CD4-positive, alpha-beta T cell (primary cell): ENCODE measurements at regions of chr9 and their contacts with region 1.

Region 1: DNA sequence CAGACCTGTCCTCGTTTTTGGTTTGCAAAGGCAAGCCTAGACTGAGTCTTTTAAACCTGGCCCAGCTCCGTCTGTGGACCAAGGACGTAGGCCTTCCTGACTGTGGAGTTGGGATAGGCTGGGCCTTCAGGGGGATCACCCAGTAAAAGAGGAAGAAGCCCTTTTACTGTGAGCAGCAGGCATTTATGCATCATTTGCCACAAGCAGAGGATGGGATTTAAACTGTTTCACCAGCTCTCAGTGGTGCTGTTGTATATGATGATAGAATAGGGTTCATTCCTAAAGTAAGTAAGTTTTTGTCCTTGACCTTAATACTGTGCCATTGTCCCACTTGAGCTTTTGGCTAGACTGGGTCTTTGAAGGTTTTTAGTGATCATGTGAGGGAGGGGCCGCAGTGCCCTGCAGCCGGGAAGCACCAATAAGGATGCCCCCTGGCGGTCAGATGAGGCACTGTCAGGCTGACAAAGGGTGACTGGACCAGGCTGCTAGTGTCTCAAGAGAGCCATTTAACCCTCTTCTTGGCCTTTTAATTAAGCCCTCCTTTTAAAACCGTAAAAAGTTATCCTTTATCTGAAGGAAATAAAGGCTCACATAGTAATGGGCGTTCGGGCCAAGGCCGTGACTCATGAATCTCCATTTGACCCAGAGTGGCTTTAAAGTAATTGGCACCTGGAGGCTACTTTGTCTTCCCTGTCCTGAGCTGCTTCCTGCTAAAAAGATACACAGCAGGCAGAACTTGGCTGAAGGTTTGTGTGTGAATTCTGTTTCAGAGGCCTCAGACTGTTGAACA is 74.0 kb downstream of the UBAP1 start:
- DNase-seq: peak; percentile 36 to 81 (median 56)
- ATAC-seq: peak; percentile 75
- H3K4me3 ChIP-seq: no peak overlapping the region
- H3K4me3 Mint-ChIP-seq: no peak overlapping the region
- H3K27ac ChIP-seq: no peak overlapping the region
- H3K27ac Mint-ChIP-seq: peak overlapping the region; percentile 71
- H3K4me1 ChIP-seq: peaks cover 21% of the 10 kb centered on the region
- H3K4me1 Mint-ChIP-seq: peaks cover 25% of the 10 kb centered on the region
- H3K27me3 ChIP-seq: no peaks in the 10 kb centered on the region
- H3K27me3 Mint-ChIP-seq: no peaks in the 10 kb centered on the region
- CTCF ChIP-seq: peak; percentile 91

Region 2: GRCh38 chr9:34010979-34011378 is 241.9 kb before region 1 on chr9:
- CTCF ChIA-PET with region 1: no interaction called
- POLR2A ChIA-PET with region 1: no interaction called
- intact Hi-C with region 1: loop called (anchors 1 kb)
- DNase-seq: peak in 4 of 14 experiments; percentile 15 to 43 (median 40)
- ATAC-seq: peak; percentile 48
- H3K4me3 ChIP-seq: no peak overlapping the region
- H3K4me3 Mint-ChIP-seq: no peak overlapping the region
- H3K27ac ChIP-seq: no peak overlapping the region
- H3K27ac Mint-ChIP-seq: no peak overlapping the region
- H3K4me1 ChIP-seq: no peaks in the 10 kb centered on the region
- H3K4me1 Mint-ChIP-seq: no peaks in the 10 kb centered on the region
- H3K27me3 ChIP-seq: no peaks in the 10 kb centered on the region
- H3K27me3 Mint-ChIP-seq: no peaks in the 10 kb centered on the region
- CTCF ChIP-seq: peak; percentile 46

Region 3: GRCh38 chr9:34126207-34127034 is 126.4 kb before region 1 on chr9 and contains the start of gene DCAF12:
- CTCF ChIA-PET with region 1: no interaction called
- POLR2A ChIA-PET with region 1: no interaction called
- intact Hi-C with region 1: loop called (anchors 2 kb)
- DNase-seq: peak; percentile 81 to 97 (median 88)
- ATAC-seq: peak; percentile 94
- H3K4me3 ChIP-seq: peak within 1 kb of the TSS; percentile 86
- H3K4me3 Mint-ChIP-seq: peak within 1 kb of the TSS; percentile 100
- H3K27ac ChIP-seq: peak within 1 kb of the TSS; percentile 86 to 88
- H3K27ac Mint-ChIP-seq: peak within 1 kb of the TSS; percentile 99
- H3K4me1 ChIP-seq: peaks cover 45% of the 10 kb centered on the region
- H3K4me1 Mint-ChIP-seq: peaks cover 57% of the 10 kb centered on the region
- H3K27me3 ChIP-seq: no peaks in the 10 kb centered on the region
- H3K27me3 Mint-ChIP-seq: no peaks in the 10 kb centered on the region
- CTCF ChIP-seq: no peak
- total RNA-seq, gene DCAF12: 5.4 to 5.9 TPM

Region 4: DNA sequence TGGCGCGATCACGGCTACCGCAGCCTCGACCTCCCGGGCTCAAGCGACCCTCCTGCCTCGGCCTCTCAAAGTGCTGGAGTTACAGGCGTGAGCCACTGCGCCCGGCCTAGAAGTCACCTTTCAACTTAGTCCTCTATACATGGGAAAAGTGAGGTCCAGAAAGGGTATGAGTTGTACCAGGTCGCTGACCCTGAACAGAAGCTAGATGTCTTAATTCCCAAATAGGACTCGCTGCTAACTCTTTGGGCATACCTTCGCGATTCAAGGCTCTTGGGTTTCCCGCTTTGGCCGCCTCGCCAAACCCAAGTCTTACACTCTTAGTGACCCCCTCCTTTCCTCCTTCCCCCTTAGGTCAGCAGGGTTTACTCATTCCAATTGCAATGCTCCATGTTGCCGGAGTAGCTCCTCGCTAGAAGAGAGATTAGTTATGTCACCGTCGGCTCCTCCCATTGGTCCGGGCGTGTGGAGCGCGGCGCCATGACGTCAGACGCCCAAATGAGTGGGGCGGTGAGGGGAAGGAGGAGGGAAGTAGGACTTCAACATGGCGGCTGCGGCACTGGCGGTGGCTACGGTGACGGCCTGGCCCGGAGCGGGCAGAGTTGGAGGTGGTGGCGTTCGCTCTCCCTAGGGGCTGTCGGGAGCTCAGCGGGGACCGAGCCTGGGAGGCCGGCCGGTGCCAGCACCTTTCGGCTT is 74.2 kb before region 1 on chr9 and contains the start of gene UBAP1:
- CTCF ChIA-PET with region 1: interaction called, 3 read pairs
- POLR2A ChIA-PET with region 1: interaction called, 5 read pairs
- intact Hi-C with region 1: loop called in 1 of 2 experiments (anchors 2 kb)
- DNase-seq: peak; percentile 88 to 98 (median 94)
- ATAC-seq: peak; percentile 97
- H3K4me3 ChIP-seq: peak within 1 kb of the TSS; percentile 71
- H3K4me3 Mint-ChIP-seq: peak within 1 kb of the TSS; percentile 94
- H3K27ac ChIP-seq: peak within 1 kb of the TSS; percentile 87 to 90
- H3K27ac Mint-ChIP-seq: peak within 1 kb of the TSS; percentile 90
- H3K4me1 ChIP-seq: peaks cover 32% of the 10 kb centered on the region
- H3K4me1 Mint-ChIP-seq: peaks cover 15% of the 10 kb centered on the region
- H3K27me3 ChIP-seq: no peaks in the 10 kb centered on the region
- H3K27me3 Mint-ChIP-seq: no peaks in the 10 kb centered on the region
- CTCF ChIP-seq: no peak
- total RNA-seq, gene UBAP1: 47.1 to 50.4 TPM

Region 5: GRCh38 chr9:34203992-34204635 is 48.8 kb before region 1 on chr9:
- CTCF ChIA-PET with region 1: no interaction called
- POLR2A ChIA-PET with region 1: no interaction called
- intact Hi-C with region 1: no loop called
- DNase-seq: no peak
- ATAC-seq: no peak
- H3K4me3 ChIP-seq: no peak overlapping the region
- H3K4me3 Mint-ChIP-seq: no peak overlapping the region
- H3K27ac ChIP-seq: no peak overlapping the region
- H3K27ac Mint-ChIP-seq: no peak overlapping the region
- H3K4me1 ChIP-seq: peaks cover 15% of the 10 kb centered on the region
- H3K4me1 Mint-ChIP-seq: peaks cover 67% of the 10 kb centered on the region
- H3K27me3 ChIP-seq: no peaks in the 10 kb centered on the region
- H3K27me3 Mint-ChIP-seq: no peaks in the 10 kb centered on the region
- CTCF ChIP-seq: no peak

Region 6: GRCh38 chr9:36237230-36237629 is 1984.4 kb after region 1 on chr9:
- CTCF ChIA-PET with region 1: no interaction called
- POLR2A ChIA-PET with region 1: no interaction called
- intact Hi-C with region 1: no loop called
- DNase-seq: no peak
- ATAC-seq: no peak
- H3K4me3 ChIP-seq: no peak overlapping the region
- H3K4me3 Mint-ChIP-seq: no peak overlapping the region
- H3K27ac ChIP-seq: no peak overlapping the region
- H3K27ac Mint-ChIP-seq: no peak overlapping the region
- H3K4me1 ChIP-seq: no peaks in the 10 kb centered on the region
- H3K4me1 Mint-ChIP-seq: no peaks in the 10 kb centered on the region
- H3K27me3 ChIP-seq: no peaks in the 10 kb centered on the region
- H3K27me3 Mint-ChIP-seq: no peaks in the 10 kb centered on the region
- CTCF ChIP-seq: no peak